Naive thymus-derived CD4-positive, alpha-beta T cell (primary cell): ENCODE measurements at regions of chr22 and their contacts with region 1.

Region 1: DNA sequence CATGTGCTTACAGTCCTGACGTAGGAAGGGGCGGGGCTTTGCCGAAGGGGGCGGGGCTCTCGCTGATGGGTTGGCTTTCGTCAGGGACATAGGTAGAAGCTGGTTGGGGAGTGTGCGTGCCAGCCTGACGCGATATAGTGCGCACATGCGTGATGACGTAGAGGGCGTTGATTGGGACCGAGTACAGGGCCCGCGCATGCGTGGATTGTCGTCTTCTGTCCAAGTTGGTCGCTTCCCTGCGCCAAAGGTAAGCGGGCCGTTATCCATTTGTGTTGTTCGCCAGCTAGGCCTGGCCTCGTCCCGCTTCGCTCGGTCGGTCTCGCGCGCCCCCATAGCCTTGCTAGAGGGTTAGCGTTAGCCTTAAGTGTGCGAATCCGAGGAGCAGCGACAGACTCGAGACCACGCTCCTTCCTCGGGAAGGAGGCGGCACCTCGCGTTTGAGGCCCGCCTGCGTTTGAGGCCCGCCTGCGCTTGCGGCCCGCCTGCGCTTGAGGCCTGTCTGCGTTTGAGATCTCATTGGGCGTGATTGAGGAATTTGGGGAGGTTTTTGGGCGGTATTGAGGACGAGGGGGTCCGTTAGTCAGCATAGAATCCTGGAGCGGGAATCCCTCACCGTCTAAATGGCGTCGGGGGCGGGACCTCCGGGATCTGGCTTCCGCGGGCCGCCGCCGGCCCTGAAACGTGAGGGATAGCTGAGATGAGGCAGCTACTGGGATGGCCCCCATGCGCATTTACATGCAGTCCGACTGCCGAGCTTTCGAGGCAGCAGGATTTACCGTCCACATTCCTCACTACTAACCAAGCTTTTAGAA is at the start of gene XRCC6:
- DNase-seq: peak; percentile 97 to 100 (median 99)
- ATAC-seq: peak; percentile 97
- H3K4me3 ChIP-seq: peak within 1 kb of the TSS; percentile 99
- H3K4me3 Mint-ChIP-seq: peak within 1 kb of the TSS; percentile 93 to 99 (median 97)
- H3K27ac ChIP-seq: peak within 1 kb of the TSS; percentile 99
- H3K27ac Mint-ChIP-seq: peak within 1 kb of the TSS; percentile 95 to 100 (median 99)
- H3K4me1 ChIP-seq: peaks cover 18 to 20% of the 10 kb centered on the region in 2 donors
- H3K4me1 Mint-ChIP-seq: peaks cover 22 to 63% (median 44%) of the 10 kb centered on the region in 7 donors
- H3K27me3 ChIP-seq: no peaks in the 10 kb centered on the region
- H3K27me3 Mint-ChIP-seq: peaks cover 0 to 3% (median 0%) of the 10 kb centered on the region in 5 donors
- total RNA-seq, gene XRCC6: 139 to 270 (median 160) TPM

Region 2: GRCh38 chr22:40862537-40862936 is 758.8 kb before region 1 on chr22:
- CTCF ChIA-PET with region 1: no interaction called
- POLR2A ChIA-PET with region 1: no interaction called
- intact Hi-C with region 1: no loop called
- DNase-seq: no peak
- ATAC-seq: no peak
- H3K4me3 ChIP-seq: no peak overlapping the region
- H3K4me3 Mint-ChIP-seq: no peak overlapping the region
- H3K27ac ChIP-seq: no peak overlapping the region
- H3K27ac Mint-ChIP-seq: peak overlapping the region in 3 of 9 donors; percentile 0 to 52 (median 14)
- H3K4me1 ChIP-seq: peaks cover 3 to 7% of the 10 kb centered on the region in 2 donors
- H3K4me1 Mint-ChIP-seq: peaks cover 18 to 79% (median 65%) of the 10 kb centered on the region in 7 donors
- H3K27me3 ChIP-seq: no peaks in the 10 kb centered on the region
- H3K27me3 Mint-ChIP-seq: no peaks in the 10 kb centered on the region

Region 3: DNA sequence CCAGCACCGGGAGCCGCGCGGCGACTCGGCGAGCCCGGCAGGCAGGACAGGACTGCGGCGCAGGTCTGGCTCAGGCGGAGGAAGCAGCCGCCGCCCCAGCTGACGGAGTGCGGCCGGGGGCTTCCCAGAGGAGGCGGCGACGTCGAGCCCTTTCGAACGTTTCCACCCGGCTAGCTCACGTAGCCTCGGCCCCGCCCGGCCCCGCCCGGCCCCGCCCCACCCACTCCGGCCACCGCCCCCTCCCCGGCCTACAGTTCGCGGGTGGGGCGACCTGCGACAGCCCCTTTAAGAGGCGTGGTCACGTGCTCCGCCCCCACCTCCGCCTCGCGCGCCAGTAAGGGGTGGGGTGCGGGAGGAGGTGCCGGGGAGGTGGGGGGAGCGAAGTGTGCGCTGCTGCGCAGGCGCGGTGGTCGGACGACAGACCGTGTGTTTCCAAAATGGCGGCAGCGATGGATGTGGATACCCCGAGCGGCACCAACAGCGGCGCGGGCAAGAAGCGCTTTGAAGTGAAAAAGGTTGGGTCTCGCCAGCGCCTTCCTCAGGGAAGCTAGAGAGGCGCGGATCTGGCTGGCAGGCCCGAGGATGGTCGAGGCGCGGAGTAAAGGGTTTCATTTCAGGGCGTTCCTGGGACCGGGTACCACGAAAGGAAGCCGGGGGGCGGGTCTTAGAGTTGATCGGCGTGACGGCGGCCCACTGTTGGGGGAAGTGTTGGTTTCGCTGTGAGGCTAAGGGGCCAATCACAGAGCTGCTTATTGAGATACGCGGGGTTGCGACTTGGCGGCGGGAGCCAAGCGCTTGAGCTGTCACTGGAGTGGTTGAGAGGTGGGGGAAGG is 670.1 kb before region 1 on chr22 and contains the start of gene RBX1:
- CTCF ChIA-PET with region 1: no interaction called
- POLR2A ChIA-PET with region 1: no interaction called
- intact Hi-C with region 1: loop called in 1 of 2 experiments (anchors 1 kb)
- DNase-seq: peak; percentile 96 to 100 (median 99)
- ATAC-seq: peak; percentile 92
- H3K4me3 ChIP-seq: peak within 1 kb of the TSS; percentile 98
- H3K4me3 Mint-ChIP-seq: peak within 1 kb of the TSS; percentile 91 to 99 (median 98)
- H3K27ac ChIP-seq: peak within 1 kb of the TSS; percentile 99
- H3K27ac Mint-ChIP-seq: peak within 1 kb of the TSS; percentile 96 to 100 (median 99)
- H3K4me1 ChIP-seq: peaks cover 16 to 19% of the 10 kb centered on the region in 2 donors
- H3K4me1 Mint-ChIP-seq: peaks cover 20 to 43% (median 39%) of the 10 kb centered on the region in 7 donors
- H3K27me3 ChIP-seq: no peaks in the 10 kb centered on the region
- H3K27me3 Mint-ChIP-seq: no peaks in the 10 kb centered on the region
- total RNA-seq, gene RBX1: 28.9 to 91.3 (median 32.7) TPM

Region 4: GRCh38 chr22:41078931-41079330 is 542.4 kb before region 1 on chr22:
- CTCF ChIA-PET with region 1: no interaction called
- POLR2A ChIA-PET with region 1: no interaction called
- intact Hi-C with region 1: no loop called
- DNase-seq: no peak
- ATAC-seq: no peak
- H3K4me3 ChIP-seq: no peak overlapping the region
- H3K4me3 Mint-ChIP-seq: no peak overlapping the region
- H3K27ac ChIP-seq: no peak overlapping the region
- H3K27ac Mint-ChIP-seq: peak overlapping the region in 1 of 9 donors; percentile 53
- H3K4me1 ChIP-seq: no peaks in the 10 kb centered on the region
- H3K4me1 Mint-ChIP-seq: no peaks in the 10 kb centered on the region
- H3K27me3 ChIP-seq: no peaks in the 10 kb centered on the region
- H3K27me3 Mint-ChIP-seq: peaks cover 0 to 4% (median 0%) of the 10 kb centered on the region in 5 donors

Region 5: GRCh38 chr22:41301105-41302020 is 319.9 kb before region 1 on chr22 and contains the start of gene ZC3H7B:
- CTCF ChIA-PET with region 1: no interaction called
- POLR2A ChIA-PET with region 1: interaction called, 3 read pairs
- intact Hi-C with region 1: loop called in 1 of 2 experiments (anchors 2 kb)
- DNase-seq: peak; percentile 73 to 89 (median 83)
- ATAC-seq: peak; percentile 98
- H3K4me3 ChIP-seq: peak within 1 kb of the TSS; percentile 22
- H3K4me3 Mint-ChIP-seq: peak within 1 kb of the TSS; percentile 67 to 91 (median 85)
- H3K27ac ChIP-seq: peak within 1 kb of the TSS; percentile 82
- H3K27ac Mint-ChIP-seq: peak within 1 kb of the TSS; percentile 72 to 96 (median 87)
- H3K4me1 ChIP-seq: peaks cover 13 to 15% of the 10 kb centered on the region in 2 donors
- H3K4me1 Mint-ChIP-seq: peaks cover 19 to 35% (median 32%) of the 10 kb centered on the region in 7 donors
- H3K27me3 ChIP-seq: no peaks in the 10 kb centered on the region
- H3K27me3 Mint-ChIP-seq: no peaks in the 10 kb centered on the region
- total RNA-seq, gene ZC3H7B: 36.9 to 65.9 (median 42.7) TPM

Region 6: GRCh38 chr22:41468381-41469217 is 152.7 kb before region 1 on chr22 and contains the starts of genes ACO2 and PHF5A:
- CTCF ChIA-PET with region 1: no interaction called
- POLR2A ChIA-PET with region 1: interaction called, 4 read pairs
- intact Hi-C with region 1: loop called (anchors 1 kb)
- DNase-seq: peak; percentile 93 to 99 (median 98)
- ATAC-seq: peak; percentile 96
- H3K4me3 ChIP-seq: peak within 1 kb of the TSS; percentile 76
- H3K4me3 Mint-ChIP-seq: peak within 1 kb of the TSS; percentile 88 to 94 (median 91)
- H3K27ac ChIP-seq: peak within 1 kb of the TSS; percentile 89
- H3K27ac Mint-ChIP-seq: peak within 1 kb of the TSS; percentile 98 to 100 (median 99)
- H3K4me1 ChIP-seq: peaks cover 19 to 20% of the 10 kb centered on the region in 2 donors
- H3K4me1 Mint-ChIP-seq: peaks cover 18 to 75% (median 59%) of the 10 kb centered on the region in 7 donors
- H3K27me3 ChIP-seq: no peaks in the 10 kb centered on the region
- H3K27me3 Mint-ChIP-seq: no peaks in the 10 kb centered on the region
- total RNA-seq, gene ACO2: 64.5 to 84.8 (median 70.3) TPM
- total RNA-seq, gene PHF5A: 27.8 to 63.9 (median 36.0) TPM

Region 7: DNA sequence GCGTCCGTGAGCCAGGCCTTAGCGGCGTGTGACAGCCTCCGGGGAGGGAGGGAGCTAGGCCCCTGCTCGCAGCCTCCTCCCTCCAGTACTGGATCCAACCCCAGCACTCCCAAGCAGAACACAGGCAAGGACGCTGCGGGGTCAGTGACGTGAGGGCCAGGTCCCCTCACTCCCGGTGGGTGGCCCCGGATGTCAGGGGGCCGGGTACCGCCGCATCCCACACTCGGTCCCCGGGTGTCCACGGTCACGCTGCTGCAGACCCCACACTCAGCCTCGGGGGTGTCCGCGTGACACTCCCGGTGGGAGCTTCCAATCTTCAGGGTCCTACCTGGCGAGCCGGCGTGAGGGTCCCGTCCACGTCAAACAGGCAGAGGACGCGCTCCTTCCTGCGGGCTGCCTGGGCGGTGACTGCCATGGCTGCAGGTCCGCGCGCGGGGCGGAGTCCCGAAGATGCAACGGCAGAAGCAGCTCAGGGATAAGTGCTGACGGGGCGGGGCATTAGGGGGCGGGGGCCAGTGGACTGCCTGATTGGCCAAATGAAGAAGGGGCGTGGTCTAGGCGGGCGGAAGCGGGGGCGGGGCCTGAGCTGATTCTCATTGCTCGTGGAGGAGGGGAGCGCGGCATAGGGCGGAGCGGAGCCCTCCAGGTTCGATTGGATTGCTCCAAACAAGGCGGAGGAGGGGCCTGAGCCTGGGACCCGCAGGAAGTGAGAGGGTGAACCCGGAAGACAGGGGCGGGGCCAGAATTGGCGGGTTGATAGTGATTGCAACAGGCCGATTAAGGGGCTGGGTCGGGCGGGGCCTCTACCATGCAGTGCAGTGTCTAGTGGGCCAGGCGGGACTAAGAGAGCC is 31.7 kb before region 1 on chr22 and contains the start of gene PMM1:
- CTCF ChIA-PET with region 1: interaction called, 3 read pairs
- POLR2A ChIA-PET with region 1: interaction called, 30 read pairs
- intact Hi-C with region 1: loop called (anchors 1 kb)
- DNase-seq: peak; percentile 97 to 100 (median 100)
- ATAC-seq: peak; percentile 99
- H3K4me3 ChIP-seq: peak within 1 kb of the TSS; percentile 97
- H3K4me3 Mint-ChIP-seq: peak within 1 kb of the TSS; percentile 76 to 96 (median 93)
- H3K27ac ChIP-seq: peak within 1 kb of the TSS; percentile 79
- H3K27ac Mint-ChIP-seq: peak within 1 kb of the TSS; percentile 81 to 93 (median 86)
- H3K4me1 ChIP-seq: peaks cover 9 to 11% of the 10 kb centered on the region in 2 donors
- H3K4me1 Mint-ChIP-seq: peaks cover 5 to 28% (median 22%) of the 10 kb centered on the region in 7 donors
- H3K27me3 ChIP-seq: no peaks in the 10 kb centered on the region
- H3K27me3 Mint-ChIP-seq: no peaks in the 10 kb centered on the region
- total RNA-seq, gene PMM1: 22.5 to 34.3 (median 26.9) TPM

Region 8: GRCh38 chr22:41666661-41667258 is 45.5 kb after region 1 on chr22:
- CTCF ChIA-PET with region 1: interaction called, 4 read pairs
- POLR2A ChIA-PET with region 1: interaction called, 3 read pairs
- intact Hi-C with region 1: loop called in 1 of 2 experiments (anchors 1 kb)
- DNase-seq: peak; percentile 88 to 97 (median 95)
- ATAC-seq: peak; percentile 98
- H3K4me3 ChIP-seq: peak overlapping the region; percentile 44
- H3K4me3 Mint-ChIP-seq: peak overlapping the region; percentile 75 to 87 (median 82)
- H3K27ac ChIP-seq: peak overlapping the region; percentile 72
- H3K27ac Mint-ChIP-seq: peak overlapping the region; percentile 91 to 99 (median 97)
- H3K4me1 ChIP-seq: peaks cover 7% of the 10 kb centered on the region in 2 donors
- H3K4me1 Mint-ChIP-seq: peaks cover 0 to 25% (median 10%) of the 10 kb centered on the region in 7 donors
- H3K27me3 ChIP-seq: no peaks in the 10 kb centered on the region
- H3K27me3 Mint-ChIP-seq: no peaks in the 10 kb centered on the region

Region 9: DNA sequence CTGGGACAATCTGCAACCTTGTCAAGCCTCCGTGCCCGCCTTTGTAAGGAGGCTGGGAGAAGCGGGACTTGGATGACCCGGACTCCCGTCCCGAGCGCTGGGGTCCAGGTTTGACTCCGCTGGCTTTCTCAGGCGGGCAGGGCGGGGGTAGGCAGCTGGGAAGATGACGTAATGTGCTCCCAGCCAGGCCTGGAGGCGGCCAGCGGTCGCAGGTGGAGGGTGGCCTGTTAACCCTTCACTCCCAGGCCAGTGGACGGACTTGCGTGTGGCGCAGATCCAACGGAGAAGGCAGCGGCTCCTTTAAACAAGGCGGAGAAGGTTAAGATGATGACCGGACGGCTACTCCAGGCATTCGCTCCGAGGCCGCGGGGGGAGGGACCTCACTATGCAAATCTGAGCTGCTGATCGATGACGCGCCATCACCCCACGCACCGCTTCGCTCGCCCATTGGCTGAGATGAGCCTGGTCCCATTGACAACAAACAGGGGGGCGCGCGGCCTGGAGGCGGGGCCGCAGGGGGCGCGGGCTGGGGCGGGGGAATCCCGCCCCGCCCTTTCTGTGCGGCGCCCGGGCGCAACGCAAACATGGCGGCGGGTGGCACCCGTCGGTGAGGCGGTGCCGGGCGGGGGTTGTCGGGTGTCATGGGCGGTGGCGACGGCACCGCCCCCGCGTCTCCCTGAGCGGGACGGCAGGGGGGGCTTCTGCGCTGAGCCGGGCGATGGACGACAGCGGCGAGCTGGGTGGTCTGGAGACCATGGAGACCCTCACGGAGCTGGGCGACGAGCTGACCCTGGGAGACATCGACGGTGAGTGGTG is 211.5 kb after region 1 on chr22 and contains the start of gene SREBF2:
- CTCF ChIA-PET with region 1: no interaction called
- POLR2A ChIA-PET with region 1: interaction called, 3 read pairs
- intact Hi-C with region 1: loop called in 1 of 2 experiments (anchors 1 kb)
- DNase-seq: peak; percentile 93 to 99 (median 97)
- ATAC-seq: peak; percentile 96
- H3K4me3 ChIP-seq: peak within 1 kb of the TSS; percentile 99
- H3K4me3 Mint-ChIP-seq: peak within 1 kb of the TSS; percentile 90 to 98 (median 95)
- H3K27ac ChIP-seq: peak within 1 kb of the TSS; percentile 97
- H3K27ac Mint-ChIP-seq: peak within 1 kb of the TSS; percentile 94 to 100 (median 99)
- H3K4me1 ChIP-seq: peaks cover 0 to 10% of the 10 kb centered on the region in 2 donors
- H3K4me1 Mint-ChIP-seq: peaks cover 15 to 54% (median 30%) of the 10 kb centered on the region in 7 donors
- H3K27me3 ChIP-seq: no peaks in the 10 kb centered on the region
- H3K27me3 Mint-ChIP-seq: peaks cover 0 to 2% (median 0%) of the 10 kb centered on the region in 5 donors
- total RNA-seq, gene SREBF2: 71.5 to 117 (median 101) TPM